Right ventricle myocardium superior (tissue), 1 donor: ENCODE measurements at regions of chr2 and their contacts with region 1.

Region 1: GRCh38 chr2:168246483-168247340 is 683 bp downstream of the STK39 start:
- DNase-seq: peak; percentile 84
- ATAC-seq: peak; percentile 82

Region 2: GRCh38 chr2:168136392-168136977 is 110.2 kb before region 1 on chr2:
- intact Hi-C with region 1: loop called (anchors 10 kb)
- DNase-seq: no peak
- ATAC-seq: no peak